Heart left ventricle (tissue), 16 donors: ENCODE measurements at regions of chr20 and their contacts with region 1.

Region 1: GRCh38 chr20:2109425-2110210 is 8.0 kb downstream of the STK35 start:
- DNase-seq: peak in 4 of 5 donors; percentile 69 to 89 (median 78)
- ATAC-seq: peak; percentile 80 to 86 (median 82)
- H3K4me3 ChIP-seq: peak overlapping the region in 1 of 12 donors; percentile 3
- H3K27ac ChIP-seq: peak overlapping the region; percentile 45 to 99 (median 74)
- H3K4me1 ChIP-seq: peaks cover 13 to 100% (median 91%) of the 10 kb centered on the region in 12 donors
- H3K27me3 ChIP-seq: no peaks in the 10 kb centered on the region
- CTCF ChIP-seq: no peak
- POLR2A ChIP-seq: no peak

Region 2: DNA sequence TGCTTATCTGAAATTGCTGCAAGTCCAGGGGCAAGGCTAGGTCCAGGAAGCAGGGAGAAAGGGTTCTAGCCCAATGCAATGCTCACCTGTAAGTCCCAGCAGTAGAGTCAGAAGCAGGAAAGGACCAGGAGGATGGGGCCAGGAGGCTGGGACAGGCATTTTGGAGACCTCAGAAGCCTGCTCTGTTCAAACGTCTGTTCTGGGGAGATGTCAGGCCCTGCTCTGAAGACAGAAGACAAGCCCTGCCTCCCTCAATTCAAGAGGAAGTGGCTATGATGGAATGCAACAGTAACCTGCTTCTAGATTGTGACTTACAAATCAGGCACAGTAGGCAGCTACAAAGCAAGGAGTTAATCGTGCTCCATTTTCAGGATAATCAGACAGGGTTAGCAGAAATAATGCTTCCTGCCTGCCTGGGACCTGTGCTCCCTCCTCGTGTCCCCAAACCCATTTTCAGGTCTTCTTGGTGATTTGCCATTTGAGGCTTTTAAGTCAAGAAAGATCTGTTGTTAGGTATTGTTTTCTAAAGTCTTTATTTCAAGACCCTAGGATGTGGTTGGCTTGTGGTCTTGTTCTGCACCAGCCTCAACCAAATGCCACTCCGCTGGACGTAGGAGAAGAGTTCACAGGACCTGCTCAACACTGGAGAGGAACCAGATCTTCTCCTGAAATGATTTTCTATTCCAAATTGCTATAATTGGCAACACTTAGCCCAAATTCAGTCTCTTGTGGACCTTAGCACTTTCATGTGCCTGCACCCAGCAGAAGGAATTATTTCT is 451.9 kb before region 1 on chr20 and contains the start of gene SIRPG:
- intact Hi-C with region 1: no loop called
- DNase-seq: no peak
- ATAC-seq: no peak
- H3K4me3 ChIP-seq: peak within 1 kb of the TSS in 1 of 12 donors; percentile 34
- H3K27ac ChIP-seq: peak within 1 kb of the TSS in 1 of 12 donors; percentile 68
- H3K4me1 ChIP-seq: peaks cover 0 to 31% (median 0%) of the 10 kb centered on the region in 12 donors
- H3K27me3 ChIP-seq: peaks cover 0 to 21% (median 0%) of the 10 kb centered on the region in 9 donors
- CTCF ChIP-seq: no peak
- POLR2A ChIP-seq: no peak
- total RNA-seq, gene SIRPG: 0.54 to 2.3 TPM in 2 of 9 donors, not detected in the others

Region 3: GRCh38 chr20:2140561-2140960 is 30.9 kb after region 1 on chr20:
- intact Hi-C with region 1: loop called in 5 of 10 experiments (anchors 2 to 5 kb)
- DNase-seq: peak in 4 of 5 donors; percentile 67 to 92 (median 85)
- ATAC-seq: peak; percentile 89 to 90 (median 90)
- H3K4me3 ChIP-seq: no peak overlapping the region
- H3K27ac ChIP-seq: peak overlapping the region; percentile 56 to 89 (median 83)
- H3K4me1 ChIP-seq: peaks cover 3 to 97% (median 65%) of the 10 kb centered on the region in 12 donors
- H3K27me3 ChIP-seq: no peaks in the 10 kb centered on the region
- CTCF ChIP-seq: peak in 1 of 12 donors; percentile 11
- POLR2A ChIP-seq: no peak